Heart left ventricle (tissue), 16 donors: ENCODE measurements at regions of chr19 and their contacts with region 1.

Region 1: GRCh38 chr19:47256688-47257443 is 541 bp downstream of the CCDC9 start:
- DNase-seq: peak; percentile 100
- ATAC-seq: peak; percentile 84 to 90 (median 87)
- H3K4me3 ChIP-seq: peak overlapping the region; percentile 22 to 79 (median 64)
- H3K27ac ChIP-seq: peak overlapping the region; percentile 88 to 99 (median 93)
- H3K4me1 ChIP-seq: peaks cover 0 to 31% (median 24%) of the 10 kb centered on the region in 12 donors
- H3K27me3 ChIP-seq: no peaks in the 10 kb centered on the region
- CTCF ChIP-seq: no peak
- POLR2A ChIP-seq: no peak

Region 2: GRCh38 chr19:46850228-46851203 is 406.4 kb before region 1 on chr19 and contains the start of gene AP2S1:
- intact Hi-C with region 1: loop called in 1 of 10 experiments (anchors 10 kb)
- DNase-seq: peak; percentile 93 to 97 (median 97)
- ATAC-seq: peak; percentile 92 to 97 (median 96)
- H3K4me3 ChIP-seq: peak within 1 kb of the TSS; percentile 66 to 97 (median 79)
- H3K27ac ChIP-seq: peak within 1 kb of the TSS; percentile 40 to 92 (median 86)
- H3K4me1 ChIP-seq: peaks cover 0 to 32% (median 12%) of the 10 kb centered on the region in 12 donors
- H3K27me3 ChIP-seq: no peaks in the 10 kb centered on the region
- CTCF ChIP-seq: peak in 1 of 12 donors; percentile 17
- POLR2A ChIP-seq: peak in 1 of 2 donors; percentile 78
- total RNA-seq, gene AP2S1: 75.3 to 148 (median 84.5) TPM

Region 3: DNA sequence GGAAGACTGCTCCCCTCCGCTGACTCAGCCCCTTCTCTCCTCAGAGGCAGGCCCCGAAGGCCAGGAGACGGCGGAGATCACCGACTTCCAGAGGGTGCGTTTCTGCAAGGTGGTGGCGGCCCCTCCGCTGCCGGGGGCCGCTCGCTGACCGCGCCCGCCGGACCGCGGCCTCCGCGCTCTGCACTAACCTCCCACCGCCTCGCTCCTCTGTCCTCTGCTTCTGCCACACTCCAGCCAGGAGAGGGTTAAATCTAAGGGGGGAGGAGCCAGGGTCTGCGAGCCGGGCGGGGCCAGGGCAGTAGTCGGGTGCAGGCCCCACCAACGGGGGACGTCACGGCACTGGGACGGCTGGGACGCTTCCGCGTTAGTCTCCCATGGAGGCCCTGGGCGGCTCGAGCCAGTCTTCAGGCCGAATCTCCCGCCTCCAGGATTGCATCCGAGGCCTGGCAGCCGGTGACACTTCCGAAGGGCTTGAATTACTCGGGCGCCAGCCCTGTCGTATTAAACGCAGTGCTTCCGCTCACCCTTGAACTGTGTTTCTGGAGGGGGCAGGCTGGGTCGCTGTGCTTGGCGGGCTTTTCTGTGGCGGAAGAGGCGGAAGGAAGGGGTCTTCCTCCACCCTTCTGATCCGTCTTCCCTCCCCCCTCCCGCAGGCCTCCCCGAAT is 16.6 kb after region 1 on chr19:
- intact Hi-C with region 1: loop called in 6 of 10 experiments (anchors 1 to 2 kb)
- DNase-seq: peak; percentile 92 to 95 (median 94)
- ATAC-seq: peak; percentile 76 to 84 (median 77)
- H3K4me3 ChIP-seq: peak overlapping the region; percentile 47 to 83 (median 72)
- H3K27ac ChIP-seq: peak overlapping the region; percentile 89 to 99 (median 95)
- H3K4me1 ChIP-seq: peaks cover 3 to 48% (median 34%) of the 10 kb centered on the region in 12 donors
- H3K27me3 ChIP-seq: no peaks in the 10 kb centered on the region
- CTCF ChIP-seq: peak in 1 of 12 donors; percentile 9
- POLR2A ChIP-seq: peak in 1 of 2 donors; percentile 70